ENCODE measurements at regions of chr1 and their contacts with region 1.

Region 1: GRCh38 chr1:36664571-36665287 is 182.0 kb upstream of the CSF3R start:
- DNase-seq: no peak
- H3K4me3 Mint-ChIP-seq: no peak overlapping the region
- H3K27ac Mint-ChIP-seq: no peak overlapping the region
- H3K4me1 Mint-ChIP-seq: no peaks in the 10 kb centered on the region
- H3K27me3 Mint-ChIP-seq: peaks cover 6% of the 10 kb centered on the region

Region 2: DNA sequence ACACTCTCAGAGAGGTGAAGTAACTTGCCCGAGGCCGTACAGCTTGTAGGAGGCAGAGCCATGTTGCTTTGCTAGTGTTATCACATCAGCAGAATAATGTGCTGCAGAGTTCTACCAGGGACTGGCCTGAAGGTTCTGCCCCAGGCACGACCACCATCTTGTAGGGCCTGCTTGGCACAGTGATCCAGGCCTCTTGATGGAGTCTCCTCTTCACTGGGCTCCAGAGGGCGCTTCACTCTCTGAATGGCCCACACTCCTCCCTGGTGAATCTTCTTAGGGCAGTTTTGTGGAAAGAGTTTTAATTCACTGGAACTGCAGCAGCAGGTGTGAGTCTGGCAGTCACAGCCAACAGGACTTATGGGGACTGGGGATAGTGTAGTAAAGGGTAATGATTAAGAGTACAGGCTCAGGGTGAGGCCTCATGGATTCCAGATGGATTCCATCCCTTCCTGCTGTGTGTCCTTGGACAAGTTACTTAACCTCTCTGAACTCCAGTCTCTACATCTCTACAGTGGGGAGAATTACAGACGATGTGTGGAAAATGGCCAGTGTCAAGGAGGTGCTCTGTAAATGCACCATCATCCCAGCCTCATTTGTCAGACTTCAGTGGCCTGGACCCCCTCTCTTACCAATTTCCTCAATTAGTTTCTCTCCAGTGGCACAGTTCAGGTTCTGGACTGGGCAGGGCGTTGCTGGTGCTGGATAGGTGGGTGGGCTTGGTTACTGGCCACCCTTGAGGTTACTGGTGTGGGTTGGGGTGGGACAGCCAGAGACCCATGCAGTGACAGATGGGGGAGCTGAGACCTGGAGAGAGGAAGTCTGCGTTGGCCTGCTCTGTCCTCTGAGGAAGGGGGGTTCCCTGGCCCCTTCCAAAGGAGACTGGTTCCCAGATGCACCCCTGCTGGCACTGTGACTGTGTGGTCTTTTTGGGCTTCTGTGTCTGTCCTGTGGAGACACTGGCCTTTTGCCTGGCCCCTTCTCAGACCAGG is 136.1 kb before region 1 on chr1:
- CTCF ChIA-PET with region 1: no interaction called
- intact Hi-C with region 1: no loop called
- DNase-seq: no peak
- H3K4me3 Mint-ChIP-seq: no peak overlapping the region
- H3K27ac Mint-ChIP-seq: no peak overlapping the region
- H3K4me1 Mint-ChIP-seq: peaks cover under 1% of the 10 kb centered on the region
- H3K27me3 Mint-ChIP-seq: peaks cover 2% of the 10 kb centered on the region

Region 3: DNA sequence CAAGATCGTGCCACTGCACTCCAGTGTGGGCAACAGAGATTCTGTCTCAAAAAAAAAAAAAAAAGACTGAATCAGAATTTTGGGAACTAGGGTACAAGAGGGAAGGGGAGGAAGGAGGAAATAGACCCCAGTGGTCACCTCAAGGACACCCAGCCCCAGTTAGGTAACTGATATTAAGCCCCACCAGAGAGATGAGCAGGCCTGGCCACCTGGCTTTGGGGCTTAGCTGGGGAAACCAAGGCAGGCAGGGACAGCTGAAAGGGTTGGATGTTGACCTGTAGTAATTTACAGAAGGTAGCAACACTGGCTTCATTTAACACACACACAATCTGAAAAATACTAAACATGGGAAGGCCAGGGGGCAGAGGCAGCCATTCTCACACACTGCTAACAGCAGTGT is 1137.7 kb after region 1 on chr1:
- CTCF ChIA-PET with region 1: no interaction called
- intact Hi-C with region 1: loop called (anchors 5 kb)
- DNase-seq: no peak
- H3K4me3 Mint-ChIP-seq: no peak overlapping the region
- H3K27ac Mint-ChIP-seq: no peak overlapping the region
- H3K4me1 Mint-ChIP-seq: peaks cover 20% of the 10 kb centered on the region
- H3K27me3 Mint-ChIP-seq: no peaks in the 10 kb centered on the region